SK-N-SH (cell line): ENCODE measurements at regions of chr1 and their contacts with region 1.

Region 1: DNA sequence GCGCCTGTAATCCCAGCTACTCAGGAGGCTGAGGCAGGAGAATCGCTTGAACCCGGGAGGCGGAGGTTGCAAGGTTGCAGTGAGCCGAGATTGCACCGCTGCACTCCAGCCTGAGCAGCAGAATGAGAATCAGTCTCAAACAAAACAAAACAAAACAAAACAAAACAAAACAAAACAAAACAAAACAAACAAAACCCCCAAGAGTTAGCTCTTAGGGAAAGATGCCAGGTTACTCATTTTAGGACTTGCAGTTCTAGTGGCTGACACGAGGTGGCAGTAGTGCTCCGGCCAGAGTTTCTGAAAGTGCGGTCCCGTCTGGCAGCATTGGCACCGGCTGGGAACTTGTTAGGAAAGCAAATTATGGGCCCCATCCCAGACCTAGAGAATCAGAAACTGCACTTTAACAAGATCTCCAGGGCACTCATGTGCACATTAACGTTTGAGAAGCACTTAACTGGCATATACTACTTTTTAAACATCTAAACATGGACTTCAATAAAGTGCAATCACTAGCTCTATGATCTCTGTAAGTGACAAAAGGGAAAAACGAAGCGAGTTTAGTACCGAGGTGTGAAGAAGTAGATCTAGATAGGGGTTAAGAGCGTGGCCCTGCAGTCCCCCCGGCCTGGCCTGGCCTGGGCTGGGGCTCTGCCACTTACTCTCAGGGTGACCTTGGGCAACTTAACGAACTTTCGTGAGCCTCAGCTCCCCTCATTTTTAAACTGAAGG is 41.9 kb upstream of the TNFRSF1B start:
- DNase-seq: peak; percentile 77
- H3K4me3 ChIP-seq: peak overlapping the region in 1 of 2 experiments; percentile 14; a peak in 1 of 4 replicates
- H3K27ac ChIP-seq: no peak overlapping the region
- H3K4me1 ChIP-seq: no peaks in the 10 kb centered on the region
- H3K27me3 ChIP-seq: peaks cover 3% of the 10 kb centered on the region; the same call in 1 of the 2 replicates
- CTCF ChIP-seq: peak; percentile 95
- EP300 ChIP-seq: no peak
- RAD21 ChIP-seq: peak; percentile 99

Region 2: GRCh38 chr1:11874258-11874562 is 250.6 kb before region 1 on chr1:
- CTCF ChIA-PET with region 1: no interaction called
- POLR2A ChIA-PET with region 1: no interaction called
- DNase-seq: no peak
- H3K4me3 ChIP-seq: no peak overlapping the region
- H3K27ac ChIP-seq: no peak overlapping the region; a peak in 1 of 4 replicates
- H3K4me1 ChIP-seq: peaks cover 0 to 33% of the 10 kb centered on the region in 2 experiments; a peak in 1 of 4 replicates
- H3K27me3 ChIP-seq: 0 out of 2 replicates have a peak, but pooled peaks cover 12% of the 10 kb centered on the region
- CTCF ChIP-seq: no peak
- EP300 ChIP-seq: no peak
- RAD21 ChIP-seq: no peak

Region 3: GRCh38 chr1:12087797-12088314 is 37.0 kb before region 1 on chr1:
- CTCF ChIA-PET with region 1: interaction called, 11 read pairs
- POLR2A ChIA-PET with region 1: no interaction called
- DNase-seq: no peak
- H3K4me3 ChIP-seq: no peak overlapping the region
- H3K27ac ChIP-seq: no peak overlapping the region
- H3K4me1 ChIP-seq: no peaks in the 10 kb centered on the region
- H3K27me3 ChIP-seq: no peaks in the 10 kb centered on the region
- CTCF ChIP-seq: no peak
- EP300 ChIP-seq: no peak
- RAD21 ChIP-seq: no peak

Region 4: DNA sequence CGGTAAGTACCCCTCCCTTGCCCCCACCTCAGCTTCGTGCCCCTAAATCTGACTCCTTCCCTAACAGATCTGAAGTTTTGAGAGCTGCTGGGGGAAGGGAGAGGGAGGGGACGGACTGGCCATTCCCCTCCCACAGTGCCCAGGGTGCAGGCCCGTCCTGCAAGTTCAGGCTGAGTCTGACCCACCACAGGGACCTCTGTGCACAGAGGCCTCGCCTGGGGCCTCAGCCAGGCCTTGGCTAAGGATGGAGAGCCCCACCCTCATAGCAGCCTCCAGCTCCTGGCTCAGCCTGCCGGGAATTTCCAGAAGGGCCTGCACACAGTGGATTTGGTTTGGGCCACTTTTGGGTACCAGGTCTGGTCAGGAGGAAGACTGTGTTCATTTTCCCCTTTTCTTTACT is 10.8 kb after region 1 on chr1:
- CTCF ChIA-PET with region 1: interaction called, 98 read pairs
- POLR2A ChIA-PET with region 1: no interaction called
- DNase-seq: no peak
- H3K4me3 ChIP-seq: no peak overlapping the region
- H3K27ac ChIP-seq: no peak overlapping the region
- H3K4me1 ChIP-seq: no peaks in the 10 kb centered on the region; a peak in 1 of 4 replicates
- H3K27me3 ChIP-seq: no peaks in the 10 kb centered on the region
- CTCF ChIP-seq: no peak
- EP300 ChIP-seq: no peak
- RAD21 ChIP-seq: no peak

Region 5: DNA sequence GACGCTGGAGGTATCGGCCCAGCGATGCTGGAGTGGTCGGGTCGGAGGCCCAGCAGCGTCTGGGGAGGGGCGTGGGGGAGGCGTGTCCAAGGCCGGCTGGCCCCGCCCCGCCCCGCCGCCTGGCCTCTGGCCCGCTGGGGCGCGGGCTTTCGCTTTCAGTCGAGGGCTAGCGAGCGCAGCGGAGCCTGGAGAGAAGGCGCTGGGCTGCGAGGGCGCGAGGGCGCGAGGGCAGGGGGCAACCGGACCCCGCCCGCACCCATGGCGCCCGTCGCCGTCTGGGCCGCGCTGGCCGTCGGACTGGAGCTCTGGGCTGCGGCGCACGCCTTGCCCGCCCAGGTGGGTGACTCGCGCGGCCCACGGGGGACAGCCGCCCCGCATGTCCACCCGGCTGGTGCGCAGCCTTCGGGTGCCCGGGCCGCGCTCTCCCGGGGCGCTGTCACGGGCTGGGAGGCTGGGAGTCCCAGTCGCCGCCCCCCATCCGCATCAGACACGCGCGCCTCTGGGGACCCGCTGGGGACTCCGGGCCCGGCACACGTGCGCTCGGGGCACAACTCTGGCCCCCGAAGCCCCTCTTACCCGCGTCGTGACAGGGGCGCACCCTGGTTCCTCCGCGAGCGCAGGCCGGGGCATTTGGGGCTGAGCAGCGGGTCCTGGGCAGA is 42.1 kb after region 1 on chr1 and contains the start of gene TNFRSF1B:
- CTCF ChIA-PET with region 1: interaction called, 37 read pairs
- POLR2A ChIA-PET with region 1: no interaction called
- DNase-seq: peak; percentile 91
- H3K4me3 ChIP-seq: peak within 1 kb of the TSS; percentile 39 to 52
- H3K27ac ChIP-seq: no peak within 1 kb of the TSS
- H3K4me1 ChIP-seq: peaks cover 0 to 5% of the 10 kb centered on the region in 2 experiments; a peak in 1 of 4 replicates
- H3K27me3 ChIP-seq: peaks cover 15% of the 10 kb centered on the region
- CTCF ChIP-seq: no peak
- EP300 ChIP-seq: no peak
- RAD21 ChIP-seq: no peak
- polyA plus RNA-seq, gene TNFRSF1B: 0.18 and 0.36 TPM in 2 replicates

Region 6: DNA sequence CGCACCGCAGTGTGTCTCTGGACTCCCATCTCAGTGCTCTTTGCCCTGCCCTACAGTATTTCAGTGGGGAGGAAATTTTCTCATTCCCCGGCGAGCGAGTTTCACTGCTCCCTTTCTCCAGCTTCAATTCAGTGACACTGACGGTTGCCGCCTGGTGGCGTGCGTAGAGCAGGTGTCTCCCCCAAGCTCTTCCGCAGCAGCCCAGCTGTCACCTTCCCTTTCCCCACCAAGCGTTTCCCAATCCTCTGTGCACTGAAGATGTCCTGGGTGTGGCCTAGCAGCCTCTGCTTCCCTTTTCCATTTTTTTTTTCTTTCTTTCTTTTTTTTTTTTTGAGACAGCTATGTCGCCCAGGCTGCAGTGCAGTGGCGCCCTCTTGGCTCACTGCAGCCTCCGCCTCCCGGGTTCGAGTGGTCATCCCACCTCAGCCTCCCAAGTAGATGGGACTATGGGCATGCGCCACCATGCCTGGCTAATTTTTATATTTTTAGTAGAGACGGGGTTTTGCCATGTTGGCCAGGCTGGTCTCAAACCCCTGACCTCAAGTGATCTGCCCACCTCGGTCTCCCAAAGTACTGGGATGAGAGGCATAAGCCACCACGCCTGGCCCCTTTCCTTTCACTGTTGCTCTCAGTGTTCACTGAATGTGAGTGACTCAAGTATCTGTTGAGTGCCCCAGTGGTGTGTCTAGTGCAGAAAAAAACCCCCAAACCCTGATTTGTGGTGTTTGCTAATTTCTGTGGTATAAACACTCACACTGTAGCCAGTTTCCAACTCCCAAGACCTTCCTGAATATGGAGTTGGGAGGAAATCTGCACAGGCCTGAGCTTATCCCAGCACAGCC is 72.0 kb after region 1 on chr1:
- CTCF ChIA-PET with region 1: interaction called, 137 read pairs
- POLR2A ChIA-PET with region 1: no interaction called
- DNase-seq: no peak
- H3K4me3 ChIP-seq: no peak overlapping the region
- H3K27ac ChIP-seq: no peak overlapping the region
- H3K4me1 ChIP-seq: no peaks in the 10 kb centered on the region; a peak in 1 of 4 replicates
- H3K27me3 ChIP-seq: no peaks in the 10 kb centered on the region; the same call in 1 of the 2 replicates
- CTCF ChIP-seq: no peak
- EP300 ChIP-seq: no peak
- RAD21 ChIP-seq: peak; percentile 4; the same call in 1 of the 2 replicates

Region 7: DNA sequence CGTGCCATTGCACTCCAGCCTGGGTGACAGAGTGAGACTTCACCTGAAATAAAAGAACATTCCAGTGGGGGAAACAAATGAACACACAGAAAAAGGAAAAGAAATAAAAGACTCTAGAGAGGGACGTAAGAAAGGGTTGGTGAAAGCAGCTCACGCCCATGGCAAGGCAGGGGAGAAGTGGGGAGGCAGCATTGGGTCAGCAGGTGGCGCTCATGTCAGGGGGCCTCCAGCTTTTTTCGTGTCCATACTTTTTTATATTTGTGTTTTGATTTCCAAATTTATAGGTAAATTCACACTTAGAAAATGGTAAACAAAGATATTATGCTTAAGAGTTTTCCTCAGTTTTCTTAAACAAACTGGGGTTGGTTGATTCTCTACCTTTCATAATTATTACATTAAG is 150.5 kb after region 1 on chr1:
- CTCF ChIA-PET with region 1: interaction called, 13 read pairs
- POLR2A ChIA-PET with region 1: no interaction called
- DNase-seq: peak; percentile 37
- H3K4me3 ChIP-seq: no peak overlapping the region; a peak in 1 of 4 replicates
- H3K27ac ChIP-seq: no peak overlapping the region
- H3K4me1 ChIP-seq: no peaks in the 10 kb centered on the region
- H3K27me3 ChIP-seq: no peaks in the 10 kb centered on the region
- CTCF ChIP-seq: peak; percentile 70
- EP300 ChIP-seq: no peak
- RAD21 ChIP-seq: peak; percentile 57